ENCODE measurements at regions of chr19 and their contacts with region 1.

Region 1: GRCh38 chr19:6590827-6591319 is at the start of gene CD70:
- DNase-seq: peak; percentile 76
- ATAC-seq: peak; percentile 52
- H3K4me3 ChIP-seq: peak within 1 kb of the TSS in 4 of 5 experiments; percentile 16 to 60 (median 52)
- H3K4me3 Mint-ChIP-seq: peak within 1 kb of the TSS; percentile 99
- H3K27ac ChIP-seq: peak within 1 kb of the TSS in 1 of 2 donors; percentile 53
- H3K27ac Mint-ChIP-seq: peak within 1 kb of the TSS; percentile 93
- H3K4me1 ChIP-seq: peaks cover 55 to 56% of the 10 kb centered on the region in 2 donors
- H3K4me1 Mint-ChIP-seq: peaks cover 59% of the 10 kb centered on the region
- H3K27me3 ChIP-seq: peaks cover 0 to 45% (median 9%) of the 10 kb centered on the region in 4 experiments
- H3K27me3 Mint-ChIP-seq: peaks cover 32% of the 10 kb centered on the region
- CTCF ChIP-seq: no peak
- total RNA-seq, gene CD70: 48.5 and 49.1 TPM in 2 replicates

Region 2: GRCh38 chr19:6387372-6387771 is 203.5 kb before region 1 on chr19:
- CTCF ChIA-PET with region 1: no interaction called
- POLR2A ChIA-PET with region 1: no interaction called
- intact Hi-C with region 1: no loop called
- DNase-seq: no peak
- ATAC-seq: no peak
- H3K4me3 ChIP-seq: no peak overlapping the region
- H3K4me3 Mint-ChIP-seq: no peak overlapping the region
- H3K27ac ChIP-seq: no peak overlapping the region
- H3K27ac Mint-ChIP-seq: no peak overlapping the region
- H3K4me1 ChIP-seq: peaks cover 4 to 7% of the 10 kb centered on the region in 2 donors
- H3K4me1 Mint-ChIP-seq: peaks cover 12% of the 10 kb centered on the region
- H3K27me3 ChIP-seq: no peaks in the 10 kb centered on the region
- H3K27me3 Mint-ChIP-seq: no peaks in the 10 kb centered on the region
- CTCF ChIP-seq: no peak

Region 3: GRCh38 chr19:6460101-6460853 is 130.6 kb before region 1 on chr19:
- CTCF ChIA-PET with region 1: no interaction called
- POLR2A ChIA-PET with region 1: no interaction called
- intact Hi-C with region 1: no loop called
- DNase-seq: peak; percentile 99
- ATAC-seq: peak; percentile 84
- H3K4me3 ChIP-seq: peak overlapping the region; percentile 60 to 93 (median 78)
- H3K4me3 Mint-ChIP-seq: peak overlapping the region; percentile 91
- H3K27ac ChIP-seq: peak overlapping the region; percentile 76 to 86
- H3K27ac Mint-ChIP-seq: peak overlapping the region; percentile 78
- H3K4me1 ChIP-seq: peaks cover 11 to 34% of the 10 kb centered on the region in 2 donors
- H3K4me1 Mint-ChIP-seq: peaks cover 32% of the 10 kb centered on the region
- H3K27me3 ChIP-seq: peaks cover 0 to 15% (median 6%) of the 10 kb centered on the region in 4 experiments
- H3K27me3 Mint-ChIP-seq: no peaks in the 10 kb centered on the region
- CTCF ChIP-seq: peak; percentile 78

Region 4: DNA sequence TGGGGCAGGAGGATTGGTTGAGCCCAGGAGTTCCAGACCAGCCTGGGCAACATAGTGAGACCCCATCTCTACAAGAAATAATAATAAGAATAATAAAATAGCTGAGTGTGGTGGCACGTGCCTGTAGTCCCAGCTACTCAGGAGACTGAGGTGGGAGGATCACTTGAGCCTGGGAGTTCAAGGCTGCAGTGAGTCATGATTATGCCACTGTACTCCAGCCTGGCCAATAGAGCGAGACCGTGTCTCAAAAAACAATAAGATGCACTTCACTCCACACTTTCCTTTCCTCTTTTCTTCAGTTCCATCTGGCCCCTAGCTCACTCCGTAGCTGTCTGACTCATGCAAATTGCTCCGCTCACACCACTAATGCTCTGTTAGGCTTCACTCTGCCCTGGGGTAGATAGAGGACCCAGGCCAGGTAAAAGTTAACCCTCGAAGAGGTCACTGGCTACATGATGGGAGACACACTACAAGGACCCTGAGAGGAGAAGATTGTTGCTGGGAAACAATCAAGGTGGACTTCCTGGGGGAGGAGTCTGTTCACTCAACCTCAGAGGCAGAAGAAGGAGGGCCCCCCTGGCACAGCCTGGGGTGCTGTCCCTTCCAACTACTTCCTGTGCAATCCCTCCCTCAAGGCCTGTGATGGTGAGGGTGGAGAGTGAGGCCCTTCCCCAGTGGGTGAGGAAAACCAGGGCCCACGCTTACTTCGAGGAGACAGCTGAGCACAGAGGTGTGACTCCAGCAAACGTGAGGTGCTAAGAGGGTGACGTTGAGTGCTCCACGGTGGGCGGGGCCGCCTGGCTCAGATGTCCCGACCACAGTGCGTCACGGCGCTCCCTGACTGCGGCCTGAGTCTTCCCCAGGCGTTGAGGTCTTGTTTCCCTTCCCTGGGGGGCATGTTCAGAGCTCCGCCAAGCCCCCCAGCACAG is 68.9 kb before region 1 on chr19:
- CTCF ChIA-PET with region 1: interaction called, 17 read pairs
- POLR2A ChIA-PET with region 1: interaction called, 6 read pairs
- intact Hi-C with region 1: loop called (anchors 1 kb)
- DNase-seq: peak; percentile 91
- ATAC-seq: peak; percentile 72
- H3K4me3 ChIP-seq: peak overlapping the region in 3 of 5 experiments; percentile 15 to 34 (median 32)
- H3K4me3 Mint-ChIP-seq: peak overlapping the region; percentile 80
- H3K27ac ChIP-seq: peak overlapping the region; percentile 70 to 92
- H3K27ac Mint-ChIP-seq: peak overlapping the region; percentile 97
- H3K4me1 ChIP-seq: peaks cover 27 to 53% of the 10 kb centered on the region in 2 donors
- H3K4me1 Mint-ChIP-seq: peaks cover 39% of the 10 kb centered on the region
- H3K27me3 ChIP-seq: no peaks in the 10 kb centered on the region
- H3K27me3 Mint-ChIP-seq: no peaks in the 10 kb centered on the region
- CTCF ChIP-seq: no peak

Region 5: GRCh38 chr19:6535558-6536137 is 55.2 kb before region 1 on chr19:
- CTCF ChIA-PET with region 1: interaction called, 8 read pairs
- POLR2A ChIA-PET with region 1: interaction called, 3 read pairs
- intact Hi-C with region 1: loop called (anchors 2 kb)
- DNase-seq: peak; percentile 32
- ATAC-seq: no peak
- H3K4me3 ChIP-seq: no peak overlapping the region
- H3K4me3 Mint-ChIP-seq: peak overlapping the region; percentile 52
- H3K27ac ChIP-seq: peak overlapping the region in 1 of 2 donors; percentile 56
- H3K27ac Mint-ChIP-seq: peak overlapping the region; percentile 86
- H3K4me1 ChIP-seq: peaks cover 37 to 54% of the 10 kb centered on the region in 2 donors
- H3K4me1 Mint-ChIP-seq: peaks cover 46% of the 10 kb centered on the region
- H3K27me3 ChIP-seq: peaks cover 0 to 15% (median 7%) of the 10 kb centered on the region in 4 experiments
- H3K27me3 Mint-ChIP-seq: peaks cover 5% of the 10 kb centered on the region
- CTCF ChIP-seq: no peak

Region 6: GRCh38 chr19:6577476-6578125 is 13.3 kb before region 1 on chr19:
- CTCF ChIA-PET with region 1: interaction called, 6 read pairs
- POLR2A ChIA-PET with region 1: interaction called, 19 read pairs
- intact Hi-C with region 1: loop called (anchors 1 kb)
- DNase-seq: peak; percentile 88
- ATAC-seq: peak; percentile 85
- H3K4me3 ChIP-seq: peak overlapping the region in 1 of 5 experiments; percentile 3
- H3K4me3 Mint-ChIP-seq: no peak overlapping the region
- H3K27ac ChIP-seq: peak overlapping the region; percentile 68 to 78
- H3K27ac Mint-ChIP-seq: no peak overlapping the region
- H3K4me1 ChIP-seq: peaks cover 16 to 28% of the 10 kb centered on the region in 2 donors
- H3K4me1 Mint-ChIP-seq: peaks cover 21% of the 10 kb centered on the region
- H3K27me3 ChIP-seq: peaks cover 0 to 5% (median 0%) of the 10 kb centered on the region in 4 experiments
- H3K27me3 Mint-ChIP-seq: no peaks in the 10 kb centered on the region
- CTCF ChIP-seq: no peak

Region 7: DNA sequence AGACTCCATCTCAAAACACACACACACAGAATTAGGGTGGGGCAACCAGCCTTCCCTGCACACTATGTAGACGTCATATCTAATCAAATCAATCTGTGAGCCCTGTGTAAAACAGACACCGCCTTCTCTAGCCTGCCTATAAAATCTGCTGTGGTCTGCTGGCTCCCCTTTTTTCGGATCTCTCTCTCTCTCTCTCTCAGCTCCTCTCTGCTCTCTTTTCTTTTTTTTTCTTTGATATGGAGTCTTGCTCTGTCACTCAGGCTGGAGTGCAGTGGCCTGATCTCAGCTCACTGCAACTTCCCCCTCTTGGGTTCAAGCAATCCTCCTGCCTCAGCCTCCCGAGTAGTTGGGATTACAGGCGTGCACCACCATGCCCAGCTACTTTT is 11.8 kb after region 1 on chr19:
- CTCF ChIA-PET with region 1: interaction called, 6 read pairs
- POLR2A ChIA-PET with region 1: interaction called, 4 read pairs
- intact Hi-C with region 1: loop called (anchors 2 kb)
- DNase-seq: no peak
- ATAC-seq: no peak
- H3K4me3 ChIP-seq: no peak overlapping the region
- H3K4me3 Mint-ChIP-seq: peak overlapping the region; percentile 23
- H3K27ac ChIP-seq: no peak overlapping the region
- H3K27ac Mint-ChIP-seq: peak overlapping the region; percentile 63
- H3K4me1 ChIP-seq: peaks cover 0 to 35% of the 10 kb centered on the region in 2 donors
- H3K4me1 Mint-ChIP-seq: peaks cover 35% of the 10 kb centered on the region
- H3K27me3 ChIP-seq: no peaks in the 10 kb centered on the region
- H3K27me3 Mint-ChIP-seq: peaks cover 3% of the 10 kb centered on the region
- CTCF ChIP-seq: no peak

Region 8: DNA sequence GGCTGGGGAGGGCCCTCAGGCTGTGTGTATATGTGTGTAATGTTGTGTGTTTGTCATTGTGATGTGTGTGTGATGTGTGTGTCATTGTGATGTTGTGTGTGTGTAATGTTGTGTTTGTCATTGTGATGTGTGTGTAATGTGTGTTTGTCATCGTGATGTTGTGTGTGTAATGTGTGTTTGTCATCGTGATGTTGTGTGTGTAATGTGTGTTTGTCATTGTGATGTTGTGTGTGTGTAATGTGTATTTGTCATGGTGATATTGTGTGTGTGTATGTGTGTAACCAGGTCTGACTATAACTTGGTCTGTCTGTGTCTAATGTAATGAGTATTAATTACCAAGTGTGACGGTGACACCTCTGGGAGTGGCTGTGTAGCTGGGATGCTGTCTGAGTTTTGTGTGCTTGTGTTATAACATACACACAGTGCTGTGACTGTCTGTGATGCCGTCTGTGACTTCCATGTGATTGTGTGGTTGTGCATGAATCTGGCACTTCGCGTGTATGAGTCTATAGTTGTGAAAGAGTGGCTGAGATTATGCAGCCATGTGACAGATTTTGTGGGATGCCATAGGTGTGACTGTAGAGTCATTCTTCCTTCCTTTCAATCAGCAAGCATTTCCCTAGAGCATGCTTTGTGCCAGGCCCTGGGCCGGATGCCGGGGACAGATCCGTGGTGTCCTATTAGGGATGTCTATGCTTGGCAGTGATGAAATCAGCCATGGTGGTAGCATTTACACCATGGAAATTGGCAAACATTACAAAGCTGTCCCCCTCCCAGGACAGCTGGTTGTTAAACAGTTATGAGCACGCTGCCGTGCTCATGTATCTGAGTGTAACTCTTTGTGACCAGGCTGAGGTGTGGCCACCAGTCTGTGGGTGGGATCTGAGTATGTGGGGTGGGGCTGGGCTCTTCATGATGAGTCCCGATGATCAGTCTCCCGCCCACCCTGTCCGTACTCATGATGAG is 72.6 kb after region 1 on chr19:
- CTCF ChIA-PET with region 1: no interaction called
- POLR2A ChIA-PET with region 1: no interaction called
- intact Hi-C with region 1: no loop called
- DNase-seq: no peak
- ATAC-seq: no peak
- H3K4me3 ChIP-seq: no peak overlapping the region
- H3K4me3 Mint-ChIP-seq: no peak overlapping the region
- H3K27ac ChIP-seq: no peak overlapping the region
- H3K27ac Mint-ChIP-seq: no peak overlapping the region
- H3K4me1 ChIP-seq: peaks cover 3 to 4% of the 10 kb centered on the region in 2 donors
- H3K4me1 Mint-ChIP-seq: peaks cover 18% of the 10 kb centered on the region
- H3K27me3 ChIP-seq: peaks cover 0 to 26% (median 5%) of the 10 kb centered on the region in 4 experiments
- H3K27me3 Mint-ChIP-seq: peaks cover 16% of the 10 kb centered on the region
- CTCF ChIP-seq: no peak

Region 9: GRCh38 chr19:6891761-6892385 is 301.0 kb after region 1 on chr19:
- CTCF ChIA-PET with region 1: no interaction called
- POLR2A ChIA-PET with region 1: no interaction called
- intact Hi-C with region 1: no loop called
- DNase-seq: peak; percentile 24
- ATAC-seq: no peak
- H3K4me3 ChIP-seq: no peak overlapping the region
- H3K4me3 Mint-ChIP-seq: peak overlapping the region; percentile 1
- H3K27ac ChIP-seq: peak overlapping the region in 1 of 2 donors; percentile 8
- H3K27ac Mint-ChIP-seq: peak overlapping the region; percentile 42
- H3K4me1 ChIP-seq: peaks cover 8 to 14% of the 10 kb centered on the region in 2 donors
- H3K4me1 Mint-ChIP-seq: peaks cover 19% of the 10 kb centered on the region
- H3K27me3 ChIP-seq: peaks cover 0 to 5% (median 2%) of the 10 kb centered on the region in 4 experiments
- H3K27me3 Mint-ChIP-seq: peaks cover 24% of the 10 kb centered on the region
- CTCF ChIP-seq: no peak